ENCODE measurements at regions of chr3 and their contacts with region 1.

Region 1: DNA sequence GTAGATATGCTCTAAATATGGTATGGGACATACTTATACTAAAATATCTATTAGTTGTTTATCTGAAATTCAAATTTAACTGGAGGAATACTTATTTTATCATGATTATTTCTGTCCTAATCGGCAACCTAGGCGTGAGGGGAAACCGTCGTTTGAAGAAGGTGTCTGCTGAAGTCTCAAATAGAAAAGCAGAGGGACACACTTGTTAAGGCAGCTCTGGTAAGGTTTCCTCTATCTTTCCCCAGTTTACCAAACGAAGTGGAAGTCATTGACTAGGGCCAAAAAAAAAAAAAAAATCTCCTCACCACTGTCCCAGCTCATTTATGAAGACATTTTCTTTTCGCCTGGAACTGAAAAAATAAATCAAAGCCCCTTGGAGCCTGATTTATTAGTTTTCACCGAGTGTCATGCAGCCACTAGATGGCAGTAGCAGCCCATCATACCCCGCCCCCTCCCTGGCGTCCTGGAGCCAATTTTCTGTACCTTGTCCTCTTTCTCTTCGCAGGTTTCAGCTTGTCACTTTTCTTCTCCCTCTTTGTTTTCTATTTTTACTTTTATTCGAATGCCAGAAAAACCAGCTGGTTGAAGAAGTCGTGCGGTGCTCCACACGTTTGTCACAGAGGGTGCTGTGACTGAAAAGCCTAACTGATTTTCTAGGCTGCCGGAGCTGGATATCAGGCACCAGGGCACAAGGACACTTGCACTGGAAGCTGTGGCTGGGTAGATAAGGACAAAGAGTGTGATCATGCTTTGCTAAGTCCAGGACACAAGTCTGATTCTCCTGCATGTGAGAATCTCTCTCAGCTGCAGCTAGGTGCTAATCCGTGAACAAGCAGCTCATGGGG is 238.7 kb downstream of the ZPLD1 start:
- DNase-seq: peak; percentile 76
- ATAC-seq: peak; percentile 90
- H3K4me3 Mint-ChIP-seq: 0 out of 2 replicates have a peak overlapping the region, but pooled peaks have one; percentile 42
- H3K27ac Mint-ChIP-seq: no peak overlapping the region
- H3K4me1 Mint-ChIP-seq: peaks cover 23% of the 10 kb centered on the region
- H3K27me3 Mint-ChIP-seq: no peaks in the 10 kb centered on the region
- CTCF ChIP-seq: peak; percentile 73

Region 2: DNA sequence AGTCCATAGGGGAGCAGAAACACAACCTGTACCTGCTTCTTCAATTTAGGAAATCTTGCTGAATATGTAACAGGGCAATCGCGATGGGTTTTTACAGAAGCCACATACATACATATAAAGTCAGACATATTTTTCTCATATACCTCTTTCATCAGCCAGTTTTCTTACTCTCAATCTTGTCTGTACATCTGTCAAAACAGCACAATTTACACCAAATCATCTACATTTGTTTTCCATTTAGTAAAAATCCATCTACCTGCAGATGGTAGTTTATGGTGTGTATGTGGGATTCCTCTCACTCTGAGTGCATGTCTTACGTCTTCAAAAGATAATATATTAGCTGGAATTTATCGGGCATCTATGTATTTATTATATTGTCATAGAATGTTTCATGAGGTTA is 29.9 kb before region 1 on chr3:
- CTCF ChIA-PET with region 1: no interaction called
- POLR2A ChIA-PET with region 1: no interaction called
- DNase-seq: no peak
- ATAC-seq: no peak
- H3K4me3 Mint-ChIP-seq: no peak overlapping the region
- H3K27ac Mint-ChIP-seq: no peak overlapping the region
- H3K4me1 Mint-ChIP-seq: 0 out of 2 replicates have a peak, but pooled peaks cover 2% of the 10 kb centered on the region
- H3K27me3 Mint-ChIP-seq: no peaks in the 10 kb centered on the region
- CTCF ChIP-seq: no peak

Region 3: DNA sequence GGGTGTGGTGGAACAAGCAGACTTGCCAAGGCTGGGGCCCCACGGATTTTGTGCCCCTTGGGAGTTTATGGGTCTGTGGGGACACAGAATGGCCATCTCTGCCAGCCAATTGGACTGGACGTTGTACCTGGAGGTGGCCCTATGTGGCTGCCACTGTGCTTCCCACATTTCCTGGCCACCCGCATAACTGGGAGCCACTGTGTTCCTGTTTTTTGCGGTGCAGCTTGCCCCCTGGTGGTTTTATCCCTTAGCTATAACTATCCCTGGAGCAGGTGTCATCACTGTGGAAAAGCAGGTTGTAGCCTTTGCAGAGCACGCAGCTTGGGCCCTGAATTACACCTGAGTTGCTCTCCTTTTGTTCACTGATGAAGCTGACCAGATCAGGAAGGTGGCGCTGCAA is 67.6 kb after region 1 on chr3:
- CTCF ChIA-PET with region 1: interaction called, 54 read pairs
- POLR2A ChIA-PET with region 1: no interaction called
- DNase-seq: peak; percentile 24
- ATAC-seq: peak; percentile 69
- H3K4me3 Mint-ChIP-seq: no peak overlapping the region
- H3K27ac Mint-ChIP-seq: no peak overlapping the region
- H3K4me1 Mint-ChIP-seq: no peaks in the 10 kb centered on the region
- H3K27me3 Mint-ChIP-seq: no peaks in the 10 kb centered on the region
- CTCF ChIP-seq: 0 out of 2 replicates have a peak, but pooled peaks have one; percentile 24

Measured in WTC11 (cell line).